PC-9 (cell line): ENCODE measurements at regions of chr7 and their contacts with region 1.

Region 1: DNA sequence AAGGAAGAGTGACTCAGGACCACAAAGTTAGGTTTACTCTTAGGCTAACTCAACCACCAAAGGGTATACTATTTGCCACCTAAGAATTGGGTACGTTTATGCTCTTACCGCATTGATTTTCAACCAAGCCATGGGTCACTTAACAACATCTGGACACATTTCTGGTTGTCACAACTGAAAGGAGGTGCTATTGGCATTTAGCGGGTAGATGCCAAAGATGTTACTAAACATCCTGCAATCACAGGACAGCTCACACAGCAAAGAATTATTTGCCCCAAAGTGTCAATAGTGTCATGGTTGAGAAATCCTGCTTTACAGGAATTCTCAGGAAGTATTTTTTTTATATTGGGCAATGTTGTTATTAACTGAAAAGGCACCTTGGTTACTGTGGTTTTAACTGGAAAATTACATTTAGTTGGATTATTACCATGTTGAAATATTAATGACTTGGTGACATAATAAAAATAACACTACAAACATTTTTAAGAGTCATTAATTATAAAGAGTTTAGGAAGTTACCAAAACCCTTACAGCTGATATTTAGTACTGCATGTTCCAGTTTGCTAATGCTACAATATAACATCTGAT is 185.0 kb upstream of the TMEM196 start:
- DNase-seq: peak; percentile 70 to 100
- H3K4me3 ChIP-seq: peak overlapping the region; percentile 3; the same call in 1 of the 2 replicates
- H3K27ac ChIP-seq: peak overlapping the region; percentile 88
- H3K4me1 ChIP-seq: peaks cover 32% of the 10 kb centered on the region
- H3K27me3 ChIP-seq: no peaks in the 10 kb centered on the region
- CTCF ChIP-seq: no peak; the same call in 1 of the 2 replicates

Region 2: GRCh38 chr7:19754521-19755116 is 203.8 kb before region 1 on chr7:
- CTCF ChIA-PET with region 1: interaction called, 4 read pairs
- POLR2A ChIA-PET with region 1: no interaction called
- intact Hi-C with region 1: loop called (anchors 1 kb)
- DNase-seq: peak in 1 of 2 experiments; percentile 48
- H3K4me3 ChIP-seq: no peak overlapping the region
- H3K27ac ChIP-seq: no peak overlapping the region
- H3K4me1 ChIP-seq: 0 out of 2 replicates have a peak, but pooled peaks cover 5% of the 10 kb centered on the region
- H3K27me3 ChIP-seq: no peaks in the 10 kb centered on the region
- CTCF ChIP-seq: peak; percentile 99

Region 3: DNA sequence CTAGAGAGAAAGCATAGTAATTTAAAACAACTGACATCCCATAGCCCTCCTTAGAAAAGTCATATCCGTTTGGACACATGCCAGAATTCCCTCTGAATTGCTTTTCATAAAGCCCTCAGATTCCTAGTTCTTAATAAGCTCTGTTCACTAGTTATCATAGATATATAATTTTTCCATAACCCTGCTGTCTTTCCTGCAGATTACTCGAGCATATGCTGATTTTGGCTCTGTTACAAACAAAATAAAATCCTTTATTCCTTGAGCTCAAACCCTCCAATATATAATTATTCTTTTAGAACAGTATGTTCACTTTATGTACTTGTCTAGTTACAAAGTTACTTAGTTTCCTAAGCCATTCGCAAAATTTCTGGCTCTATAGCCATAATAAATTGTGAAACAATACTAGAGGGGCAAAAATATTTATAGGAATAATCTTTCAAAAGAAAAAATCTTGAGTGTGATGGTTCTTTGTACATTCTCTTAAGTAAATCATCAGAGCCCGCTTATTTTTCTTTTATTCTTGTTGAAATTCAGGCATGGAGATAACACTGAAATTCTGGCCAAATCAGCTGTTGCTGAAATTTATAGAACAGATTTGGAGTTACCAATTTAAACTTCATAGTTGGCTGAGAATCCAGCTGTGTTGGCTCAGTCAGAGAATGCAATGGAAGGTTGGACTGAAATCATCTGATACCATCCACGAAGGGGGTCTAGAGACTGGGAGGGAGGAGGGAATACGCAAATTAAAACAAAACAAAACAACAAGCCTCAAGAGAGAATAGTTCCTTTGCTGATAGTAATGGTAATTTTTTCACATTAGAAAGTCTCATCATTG is 38.9 kb before region 1 on chr7:
- CTCF ChIA-PET with region 1: no interaction called
- POLR2A ChIA-PET with region 1: interaction called, 4 read pairs
- intact Hi-C with region 1: loop called (anchors 1 kb)
- DNase-seq: no peak
- H3K4me3 ChIP-seq: no peak overlapping the region
- H3K27ac ChIP-seq: no peak overlapping the region
- H3K4me1 ChIP-seq: peaks cover 17% of the 10 kb centered on the region
- H3K27me3 ChIP-seq: no peaks in the 10 kb centered on the region
- CTCF ChIP-seq: no peak

Region 4: DNA sequence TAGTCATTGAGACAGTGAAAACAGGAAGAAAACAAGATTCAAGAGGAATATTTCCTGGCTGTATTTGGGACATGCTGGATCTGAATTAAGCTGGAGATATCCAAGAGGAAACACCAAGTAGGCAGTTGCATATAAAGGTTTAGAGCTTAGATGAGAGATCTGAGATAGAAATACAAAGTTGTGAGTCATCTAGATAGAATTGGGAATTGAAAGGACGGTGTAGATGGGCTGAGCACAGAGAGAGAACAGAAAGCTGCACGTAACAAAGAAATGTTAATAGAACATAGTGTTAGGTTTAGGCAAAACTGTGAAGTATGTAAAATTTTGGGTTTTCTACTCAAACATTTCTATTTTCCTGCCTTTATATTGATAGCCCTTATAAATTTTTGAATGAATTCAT is 33.5 kb after region 1 on chr7:
- CTCF ChIA-PET with region 1: no interaction called
- POLR2A ChIA-PET with region 1: no interaction called
- intact Hi-C with region 1: no loop called
- DNase-seq: peak in 1 of 2 experiments; percentile 30
- H3K4me3 ChIP-seq: no peak overlapping the region
- H3K27ac ChIP-seq: no peak overlapping the region
- H3K4me1 ChIP-seq: no peaks in the 10 kb centered on the region
- H3K27me3 ChIP-seq: no peaks in the 10 kb centered on the region
- CTCF ChIP-seq: no peak

Region 5: GRCh38 chr7:20132631-20133030 is 174.2 kb after region 1 on chr7:
- CTCF ChIA-PET with region 1: no interaction called
- POLR2A ChIA-PET with region 1: no interaction called
- intact Hi-C with region 1: loop called (anchors 5 kb)
- DNase-seq: peak; percentile 38 to 81
- H3K4me3 ChIP-seq: no peak overlapping the region
- H3K27ac ChIP-seq: peak overlapping the region; percentile 54
- H3K4me1 ChIP-seq: peaks cover 31% of the 10 kb centered on the region
- H3K27me3 ChIP-seq: no peaks in the 10 kb centered on the region
- CTCF ChIP-seq: no peak

Region 6: GRCh38 chr7:20241194-20241910 is 282.9 kb after region 1 on chr7:
- CTCF ChIA-PET with region 1: no interaction called
- POLR2A ChIA-PET with region 1: no interaction called
- intact Hi-C with region 1: loop called (anchors 1 kb)
- DNase-seq: peak in 1 of 2 experiments; percentile 54
- H3K4me3 ChIP-seq: no peak overlapping the region
- H3K27ac ChIP-seq: no peak overlapping the region
- H3K4me1 ChIP-seq: peaks cover 15% of the 10 kb centered on the region
- H3K27me3 ChIP-seq: no peaks in the 10 kb centered on the region
- CTCF ChIP-seq: no peak